Activated CD4-positive, alpha-beta T cell treated with anti-CD3 and anti-CD28 coated beads for 36 hours (primary cell): ENCODE measurements at regions of chr3 and their contacts with region 1.

Region 1: GRCh38 chr3:108489771-108490170 is 20.6 kb downstream of the MYH15 start:
- DNase-seq: peak; percentile 37
- ATAC-seq: peak; percentile 73
- H3K4me3 Mint-ChIP-seq: no peak overlapping the region
- H3K27ac Mint-ChIP-seq: no peak overlapping the region
- H3K4me1 Mint-ChIP-seq: peaks cover 5% of the 10 kb centered on the region
- H3K27me3 Mint-ChIP-seq: no peaks in the 10 kb centered on the region

Region 2: GRCh38 chr3:107739227-107739626 is 750.5 kb before region 1 on chr3:
- CTCF ChIA-PET with region 1: no interaction called
- POLR2A ChIA-PET with region 1: no interaction called
- intact Hi-C with region 1: no loop called
- DNase-seq: no peak
- ATAC-seq: no peak
- H3K4me3 Mint-ChIP-seq: no peak overlapping the region
- H3K27ac Mint-ChIP-seq: no peak overlapping the region
- H3K4me1 Mint-ChIP-seq: peaks cover 2% of the 10 kb centered on the region
- H3K27me3 Mint-ChIP-seq: no peaks in the 10 kb centered on the region

Region 3: DNA sequence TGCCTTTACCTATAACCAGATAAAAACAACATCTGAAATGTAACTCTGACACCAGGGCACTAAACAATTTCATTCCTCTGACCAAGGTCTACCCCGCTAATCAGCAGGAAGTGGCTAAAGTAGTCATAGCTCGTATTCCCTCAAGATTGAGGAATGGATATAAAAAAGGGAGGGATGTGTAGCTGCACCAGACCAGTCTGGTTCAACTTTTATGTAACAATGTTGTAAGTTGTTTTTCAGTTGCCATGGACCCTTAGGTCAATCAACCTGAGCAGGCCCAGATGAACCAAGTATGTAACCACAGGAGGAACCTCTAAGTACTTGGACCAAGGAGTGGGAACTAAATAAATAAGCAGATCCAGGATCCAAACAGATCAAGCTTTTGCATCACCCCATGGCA is 239.1 kb before region 1 on chr3:
- CTCF ChIA-PET with region 1: no interaction called
- POLR2A ChIA-PET with region 1: no interaction called
- intact Hi-C with region 1: no loop called
- DNase-seq: no peak
- ATAC-seq: no peak
- H3K4me3 Mint-ChIP-seq: no peak overlapping the region
- H3K27ac Mint-ChIP-seq: no peak overlapping the region
- H3K4me1 Mint-ChIP-seq: peaks cover 11% of the 10 kb centered on the region
- H3K27me3 Mint-ChIP-seq: no peaks in the 10 kb centered on the region

Region 4: GRCh38 chr3:108477511-108478147 is 12.1 kb before region 1 on chr3:
- CTCF ChIA-PET with region 1: interaction called, 24 read pairs
- POLR2A ChIA-PET with region 1: no interaction called
- intact Hi-C with region 1: no loop called
- DNase-seq: peak; percentile 78
- ATAC-seq: peak; percentile 79
- H3K4me3 Mint-ChIP-seq: no peak overlapping the region
- H3K27ac Mint-ChIP-seq: no peak overlapping the region
- H3K4me1 Mint-ChIP-seq: no peaks in the 10 kb centered on the region
- H3K27me3 Mint-ChIP-seq: peaks cover 2% of the 10 kb centered on the region

Region 5: DNA sequence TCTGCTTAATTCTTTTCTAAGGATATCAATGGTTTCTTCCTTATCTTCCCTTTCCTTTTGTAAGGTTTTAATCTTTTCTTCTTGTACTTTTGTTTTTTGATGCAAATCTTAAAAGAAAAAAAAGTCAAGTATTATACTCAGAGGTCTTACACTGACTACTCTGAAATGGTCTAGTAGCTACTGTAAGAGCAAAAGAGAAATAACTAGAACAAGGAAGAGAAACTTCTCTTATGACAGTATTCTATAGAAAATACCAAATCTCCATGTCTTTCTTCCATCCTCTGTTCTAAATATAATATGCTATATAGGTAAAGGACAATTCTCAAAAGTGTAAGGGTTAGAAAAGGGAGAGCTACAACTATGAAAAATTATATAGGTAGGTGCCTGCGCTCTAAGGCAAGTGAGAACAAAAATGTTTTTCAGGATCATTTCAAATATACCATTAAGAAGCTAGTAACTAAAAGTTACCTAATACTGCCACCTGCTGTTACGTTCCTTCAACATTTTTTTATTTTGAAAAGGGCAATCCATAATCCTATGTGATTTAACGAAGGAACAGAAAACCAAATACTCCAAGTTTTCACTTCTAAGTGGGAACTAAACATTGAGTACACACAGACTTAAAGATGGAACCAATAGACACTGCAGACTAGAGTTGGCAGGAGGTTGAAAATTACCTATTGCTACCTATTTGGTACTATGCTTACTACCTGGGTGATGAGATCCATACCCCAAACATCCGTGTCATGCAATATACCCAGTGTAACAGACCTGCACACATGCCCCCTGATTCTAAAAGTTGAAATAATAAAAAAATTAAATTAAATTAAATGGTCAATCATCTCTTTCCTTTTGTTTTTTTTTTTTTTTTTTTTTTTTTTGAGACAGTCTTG is 62.7 kb after region 1 on chr3:
- CTCF ChIA-PET with region 1: interaction called, 10 read pairs
- POLR2A ChIA-PET with region 1: no interaction called
- intact Hi-C with region 1: loop called (anchors 1 to 2 kb)
- DNase-seq: no peak
- ATAC-seq: no peak
- H3K4me3 Mint-ChIP-seq: no peak overlapping the region
- H3K27ac Mint-ChIP-seq: no peak overlapping the region
- H3K4me1 Mint-ChIP-seq: peaks cover 4% of the 10 kb centered on the region
- H3K27me3 Mint-ChIP-seq: no peaks in the 10 kb centered on the region

Region 6: DNA sequence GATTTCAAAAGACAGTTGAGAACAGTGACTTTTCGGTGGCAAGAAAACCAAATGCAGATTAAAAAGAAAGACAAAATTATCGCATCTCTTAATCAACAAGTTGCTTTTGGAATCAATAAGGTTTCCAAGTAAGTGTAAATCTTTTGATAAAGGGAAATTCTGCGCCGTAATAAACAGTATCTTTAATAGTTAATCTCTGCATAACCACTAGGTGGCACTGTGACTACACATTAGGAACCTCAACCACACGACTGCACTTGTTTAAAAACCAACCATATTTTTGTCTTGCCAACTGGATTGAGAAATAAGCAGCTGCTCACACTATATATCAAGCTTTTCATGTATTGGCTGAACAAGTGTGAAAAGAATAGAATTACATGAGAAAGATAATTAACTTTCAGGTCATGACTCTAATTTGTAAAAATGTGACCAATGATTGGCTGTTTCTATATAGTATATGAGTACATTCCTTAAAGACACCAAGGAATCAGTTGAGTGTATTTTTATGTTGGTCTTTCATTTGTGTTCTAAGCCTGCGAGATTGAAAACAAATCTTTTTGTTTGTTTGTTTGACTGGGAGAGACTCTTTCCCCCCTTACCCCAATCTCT is 172.5 kb after region 1 on chr3:
- CTCF ChIA-PET with region 1: no interaction called
- POLR2A ChIA-PET with region 1: no interaction called
- intact Hi-C with region 1: loop called in 1 of 2 experiments (anchors 2 kb)
- DNase-seq: peak; percentile 63
- ATAC-seq: peak; percentile 69
- H3K4me3 Mint-ChIP-seq: no peak overlapping the region
- H3K27ac Mint-ChIP-seq: peak overlapping the region; percentile 6
- H3K4me1 Mint-ChIP-seq: peaks cover 15% of the 10 kb centered on the region
- H3K27me3 Mint-ChIP-seq: no peaks in the 10 kb centered on the region

Region 7: DNA sequence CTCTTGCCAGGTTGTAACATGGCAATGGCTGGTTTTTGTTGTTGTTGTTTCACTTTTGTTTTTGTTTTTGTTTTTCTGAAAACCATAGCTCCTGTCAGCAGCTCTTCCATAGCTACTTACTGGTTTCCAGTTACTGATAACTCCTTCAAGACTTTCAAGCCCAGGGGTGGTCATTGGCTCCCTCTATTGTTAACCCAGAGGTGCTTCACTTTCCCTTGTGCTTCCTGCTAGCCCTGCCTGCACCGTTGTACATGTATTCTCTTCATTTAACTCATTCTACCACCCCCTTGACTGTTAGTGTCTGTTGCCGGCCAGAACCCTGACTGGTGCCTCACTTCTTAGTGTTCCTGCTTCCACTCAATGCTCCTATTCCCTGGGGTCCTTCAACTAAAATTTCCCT is 328.6 kb after region 1 on chr3:
- CTCF ChIA-PET with region 1: no interaction called
- POLR2A ChIA-PET with region 1: no interaction called
- intact Hi-C with region 1: loop called (anchors 2 kb)
- DNase-seq: peak; percentile 76
- ATAC-seq: peak; percentile 90
- H3K4me3 Mint-ChIP-seq: peak overlapping the region; percentile 18
- H3K27ac Mint-ChIP-seq: peak overlapping the region; percentile 22
- H3K4me1 Mint-ChIP-seq: peaks cover 36% of the 10 kb centered on the region
- H3K27me3 Mint-ChIP-seq: no peaks in the 10 kb centered on the region

Region 8: GRCh38 chr3:109081746-109082510 is 592.2 kb after region 1 on chr3:
- CTCF ChIA-PET with region 1: interaction called, 3 read pairs
- POLR2A ChIA-PET with region 1: no interaction called
- intact Hi-C with region 1: loop called (anchors 2 to 10 kb)
- DNase-seq: peak; percentile 46
- ATAC-seq: peak; percentile 47
- H3K4me3 Mint-ChIP-seq: no peak overlapping the region
- H3K27ac Mint-ChIP-seq: no peak overlapping the region
- H3K4me1 Mint-ChIP-seq: no peaks in the 10 kb centered on the region
- H3K27me3 Mint-ChIP-seq: peaks cover 13% of the 10 kb centered on the region

Region 9: GRCh38 chr3:110314512-110315114 is 1824.8 kb after region 1 on chr3:
- CTCF ChIA-PET with region 1: interaction called, 3 read pairs
- POLR2A ChIA-PET with region 1: no interaction called
- intact Hi-C with region 1: loop called in 1 of 2 experiments (anchors 10 kb)
- DNase-seq: peak; percentile 67
- ATAC-seq: peak; percentile 63
- H3K4me3 Mint-ChIP-seq: no peak overlapping the region
- H3K27ac Mint-ChIP-seq: no peak overlapping the region
- H3K4me1 Mint-ChIP-seq: peaks cover 2% of the 10 kb centered on the region
- H3K27me3 Mint-ChIP-seq: peaks cover 3% of the 10 kb centered on the region